AG04449 (cell line): ENCODE measurements at regions of chr18 and their contacts with region 1.

Region 1: GRCh38 chr18:36186911-36187834 is at the start of gene MOCOS:
- DNase-seq: no peak
- H3K4me3 ChIP-seq: peak within 1 kb of the TSS; percentile 72
- CTCF ChIP-seq: no peak

Region 2: GRCh38 chr18:36162981-36163380 is 24.2 kb before region 1 on chr18:
- CTCF ChIA-PET with region 1: no interaction called
- POLR2A ChIA-PET with region 1: no interaction called
- DNase-seq: no peak
- H3K4me3 ChIP-seq: no peak overlapping the region
- CTCF ChIP-seq: no peak

Region 3: DNA sequence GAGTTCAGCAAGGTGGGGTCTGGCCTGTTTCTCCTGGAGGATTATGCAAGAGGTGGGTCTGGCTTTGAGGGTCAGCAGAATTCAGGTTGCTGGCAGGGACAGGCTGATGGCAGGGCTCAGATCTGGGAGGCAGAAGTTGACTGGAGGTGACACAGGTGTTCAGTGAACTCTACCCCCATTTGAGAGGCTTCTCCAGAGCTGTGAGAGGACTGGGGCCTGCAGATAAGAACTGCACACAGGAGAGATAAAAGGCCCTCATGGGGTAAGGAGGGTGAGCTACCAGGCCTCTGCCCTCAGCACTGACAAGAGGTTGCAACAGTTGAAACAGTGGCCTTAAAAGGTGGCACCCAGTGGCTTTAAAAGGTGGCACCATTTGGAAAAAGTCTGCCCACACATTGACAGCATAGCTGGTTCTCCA is 13.2 kb after region 1 on chr18:
- CTCF ChIA-PET with region 1: interaction called, 10 read pairs
- POLR2A ChIA-PET with region 1: no interaction called
- DNase-seq: no peak
- H3K4me3 ChIP-seq: no peak overlapping the region
- CTCF ChIP-seq: no peak